GM12878 (cell line): ENCODE measurements at regions of chrX and their contacts with region 1.

Region 1: GRCh38 chrX:14039344-14039743 is 9.7 kb upstream of the GEMIN8 start:
- DNase-seq: no peak
- ATAC-seq: peak; percentile 95
- H3K4me3 ChIP-seq: no peak overlapping the region
- H3K27ac ChIP-seq: no peak overlapping the region
- H3K4me1 ChIP-seq: no peaks in the 10 kb centered on the region
- H3K27me3 ChIP-seq: peaks cover 0 to 2% of the 10 kb centered on the region in 2 experiments; a peak in 1 of 4 replicates
- CTCF ChIP-seq: peak; percentile 48 to 81 (median 61); a peak in 5 of 6 replicates
- EP300 ChIP-seq: peak in 1 of 2 experiments; percentile 99; a peak in 2 of 4 replicates
- POLR2A ChIP-seq: no peak
- RAD21 ChIP-seq: peak; percentile 88

Region 2: GRCh38 chrX:13903405-13903804 is 135.9 kb before region 1 on chrX:
- CTCF ChIA-PET with region 1: no interaction called
- POLR2A ChIA-PET with region 1: no interaction called
- RAD21 ChIA-PET with region 1: no interaction called
- SMC1A ChIA-PET with region 1: no interaction called
- in situ Hi-C with region 1: no loop called
- intact Hi-C with region 1: no loop called
- DNase-seq: no peak
- ATAC-seq: no peak
- H3K4me3 ChIP-seq: no peak overlapping the region
- H3K27ac ChIP-seq: no peak overlapping the region
- H3K4me1 ChIP-seq: no peaks in the 10 kb centered on the region
- H3K27me3 ChIP-seq: no peaks in the 10 kb centered on the region; a peak in 1 of 4 replicates
- CTCF ChIP-seq: no peak
- EP300 ChIP-seq: no peak
- POLR2A ChIP-seq: no peak
- RAD21 ChIP-seq: no peak

Region 3: GRCh38 chrX:14015294-14015693 is 24.1 kb before region 1 on chrX:
- CTCF ChIA-PET with region 1: no interaction called
- POLR2A ChIA-PET with region 1: no interaction called
- RAD21 ChIA-PET with region 1: no interaction called
- SMC1A ChIA-PET with region 1: no interaction called
- in situ Hi-C with region 1: no loop called
- intact Hi-C with region 1: no loop called
- DNase-seq: no peak
- ATAC-seq: no peak
- H3K4me3 ChIP-seq: no peak overlapping the region
- H3K27ac ChIP-seq: no peak overlapping the region
- H3K4me1 ChIP-seq: no peaks in the 10 kb centered on the region
- H3K27me3 ChIP-seq: no peaks in the 10 kb centered on the region
- CTCF ChIP-seq: no peak
- EP300 ChIP-seq: no peak
- POLR2A ChIP-seq: no peak
- RAD21 ChIP-seq: no peak

Region 4: GRCh38 chrX:14050709-14051108 is 11.4 kb after region 1 on chrX:
- CTCF ChIA-PET with region 1: interaction called, 16 read pairs
- POLR2A ChIA-PET with region 1: no interaction called
- RAD21 ChIA-PET with region 1: interaction called, 3 read pairs
- SMC1A ChIA-PET with region 1: interaction called, 6 read pairs
- in situ Hi-C with region 1: no loop called
- intact Hi-C with region 1: no loop called
- DNase-seq: no peak
- ATAC-seq: peak; percentile 55
- H3K4me3 ChIP-seq: no peak overlapping the region
- H3K27ac ChIP-seq: no peak overlapping the region
- H3K4me1 ChIP-seq: no peaks in the 10 kb centered on the region
- H3K27me3 ChIP-seq: peaks cover 2% of the 10 kb centered on the region in 2 experiments; a peak in 3 of 4 replicates
- CTCF ChIP-seq: no peak
- EP300 ChIP-seq: no peak
- POLR2A ChIP-seq: no peak
- RAD21 ChIP-seq: no peak

Region 5: GRCh38 chrX:14356401-14356800 is 317.1 kb after region 1 on chrX:
- CTCF ChIA-PET with region 1: no interaction called
- POLR2A ChIA-PET with region 1: no interaction called
- RAD21 ChIA-PET with region 1: no interaction called
- SMC1A ChIA-PET with region 1: no interaction called
- in situ Hi-C with region 1: no loop called
- intact Hi-C with region 1: no loop called
- DNase-seq: no peak
- ATAC-seq: no peak
- H3K4me3 ChIP-seq: no peak overlapping the region
- H3K27ac ChIP-seq: no peak overlapping the region
- H3K4me1 ChIP-seq: no peaks in the 10 kb centered on the region
- H3K27me3 ChIP-seq: no peaks in the 10 kb centered on the region
- CTCF ChIP-seq: no peak
- EP300 ChIP-seq: no peak
- POLR2A ChIP-seq: no peak
- RAD21 ChIP-seq: no peak

Region 6: GRCh38 chrX:14697451-14697850 is 658.1 kb after region 1 on chrX:
- CTCF ChIA-PET with region 1: no interaction called
- POLR2A ChIA-PET with region 1: no interaction called
- RAD21 ChIA-PET with region 1: no interaction called
- SMC1A ChIA-PET with region 1: no interaction called
- in situ Hi-C with region 1: no loop called
- intact Hi-C with region 1: loop called (anchors 10 kb)
- DNase-seq: no peak
- ATAC-seq: peak; percentile 96
- H3K4me3 ChIP-seq: no peak overlapping the region
- H3K27ac ChIP-seq: no peak overlapping the region
- H3K4me1 ChIP-seq: no peaks in the 10 kb centered on the region
- H3K27me3 ChIP-seq: no peaks in the 10 kb centered on the region
- CTCF ChIP-seq: peak; percentile 53 to 66 (median 64)
- EP300 ChIP-seq: no peak
- POLR2A ChIP-seq: no peak
- RAD21 ChIP-seq: peak; percentile 62